ENCODE measurements at regions of chr2 and their contacts with region 1.

Region 1: GRCh38 chr2:226799181-226799975 is at the start of gene IRS1:
- DNase-seq: peak; percentile 71
- ATAC-seq: peak; percentile 65
- H3K4me3 Mint-ChIP-seq: peak within 1 kb of the TSS; percentile 84
- H3K27ac Mint-ChIP-seq: peak within 1 kb of the TSS; percentile 80
- H3K4me1 Mint-ChIP-seq: peaks cover 45% of the 10 kb centered on the region
- H3K27me3 Mint-ChIP-seq: peaks cover under 1% of the 10 kb centered on the region
- CTCF ChIP-seq: no peak
- total RNA-seq, gene IRS1: 3.5 to 4.0 TPM

Region 2: DNA sequence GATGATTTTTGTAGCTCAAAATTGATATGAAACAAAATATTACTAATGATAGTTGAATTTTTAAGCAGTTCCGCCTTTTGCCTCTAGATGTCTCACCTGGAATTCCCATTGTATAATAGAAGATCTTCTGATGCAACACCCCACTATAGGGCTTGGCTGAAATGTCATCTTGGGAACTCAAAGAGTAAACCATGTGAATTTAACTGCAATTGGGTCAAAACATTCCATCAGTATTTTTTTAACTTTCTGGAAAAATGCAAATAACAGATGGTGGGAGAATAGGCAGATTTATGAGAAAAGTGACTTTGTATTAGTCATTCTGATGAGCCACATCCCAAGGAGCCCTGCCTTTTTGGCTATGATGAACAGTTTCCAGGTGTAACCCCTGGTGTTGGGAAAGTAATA is 909.9 kb before region 1 on chr2:
- CTCF ChIA-PET with region 1: no interaction called
- POLR2A ChIA-PET with region 1: no interaction called
- intact Hi-C with region 1: loop called (anchors 5 kb)
- DNase-seq: no peak
- ATAC-seq: no peak
- H3K4me3 Mint-ChIP-seq: no peak overlapping the region
- H3K27ac Mint-ChIP-seq: no peak overlapping the region
- H3K4me1 Mint-ChIP-seq: peaks cover 2% of the 10 kb centered on the region
- H3K27me3 Mint-ChIP-seq: peaks cover 13% of the 10 kb centered on the region
- CTCF ChIP-seq: peak; percentile 76

Region 3: GRCh38 chr2:226733189-226733858 is 66.1 kb before region 1 on chr2:
- CTCF ChIA-PET with region 1: no interaction called
- POLR2A ChIA-PET with region 1: no interaction called
- intact Hi-C with region 1: no loop called
- DNase-seq: no peak
- ATAC-seq: no peak
- H3K4me3 Mint-ChIP-seq: no peak overlapping the region
- H3K27ac Mint-ChIP-seq: no peak overlapping the region
- H3K4me1 Mint-ChIP-seq: no peaks in the 10 kb centered on the region
- H3K27me3 Mint-ChIP-seq: peaks cover 1% of the 10 kb centered on the region
- CTCF ChIP-seq: no peak

Region 4: GRCh38 chr2:226813148-226813701 is 13.8 kb after region 1 on chr2:
- CTCF ChIA-PET with region 1: interaction called, 17 read pairs
- POLR2A ChIA-PET with region 1: no interaction called
- intact Hi-C with region 1: no loop called
- DNase-seq: peak; percentile 24
- ATAC-seq: no peak
- H3K4me3 Mint-ChIP-seq: no peak overlapping the region
- H3K27ac Mint-ChIP-seq: no peak overlapping the region
- H3K4me1 Mint-ChIP-seq: no peaks in the 10 kb centered on the region
- H3K27me3 Mint-ChIP-seq: peaks cover 16% of the 10 kb centered on the region
- CTCF ChIP-seq: peak; percentile 30

Region 5: GRCh38 chr2:226828191-226828590 is 28.8 kb after region 1 on chr2:
- CTCF ChIA-PET with region 1: interaction called, 14 read pairs
- POLR2A ChIA-PET with region 1: no interaction called
- intact Hi-C with region 1: no loop called
- DNase-seq: no peak
- ATAC-seq: no peak
- H3K4me3 Mint-ChIP-seq: no peak overlapping the region
- H3K27ac Mint-ChIP-seq: no peak overlapping the region
- H3K4me1 Mint-ChIP-seq: peaks cover 20% of the 10 kb centered on the region
- H3K27me3 Mint-ChIP-seq: no peaks in the 10 kb centered on the region
- CTCF ChIP-seq: no peak

Region 6: GRCh38 chr2:226984750-226985582 is 185.6 kb after region 1 on chr2:
- CTCF ChIA-PET with region 1: interaction called, 24 read pairs
- POLR2A ChIA-PET with region 1: no interaction called
- intact Hi-C with region 1: loop called (anchors 5 kb)
- DNase-seq: peak; percentile 57
- ATAC-seq: peak; percentile 97
- H3K4me3 Mint-ChIP-seq: no peak overlapping the region
- H3K27ac Mint-ChIP-seq: peak overlapping the region; percentile 34
- H3K4me1 Mint-ChIP-seq: peaks cover 22% of the 10 kb centered on the region
- H3K27me3 Mint-ChIP-seq: no peaks in the 10 kb centered on the region
- CTCF ChIP-seq: peak; percentile 65

Region 7: DNA sequence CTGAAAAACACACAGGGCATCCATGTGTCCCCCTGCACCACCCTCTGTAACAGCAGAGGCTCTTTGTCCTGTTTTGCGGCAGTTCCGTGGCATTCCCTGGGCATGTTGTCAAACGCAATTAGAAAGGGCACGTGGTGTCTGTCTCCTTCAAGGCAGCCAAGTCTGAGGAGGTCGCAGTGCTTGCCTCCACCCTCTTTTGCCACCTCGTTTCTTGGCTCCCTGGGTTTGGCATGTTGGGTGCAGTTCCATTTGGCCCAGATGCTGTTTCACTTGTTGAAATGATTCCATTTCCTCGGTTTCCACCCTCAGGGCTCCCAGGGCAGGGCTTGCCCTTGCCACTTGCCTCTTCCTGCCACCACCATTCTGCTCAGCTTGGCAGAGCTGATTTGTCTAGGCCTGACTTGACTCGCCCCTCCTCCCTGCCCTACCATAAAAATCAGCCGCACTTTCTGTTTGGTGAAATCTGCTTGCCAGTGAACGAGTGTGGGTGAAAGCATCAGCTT is 1026.7 kb after region 1 on chr2:
- CTCF ChIA-PET with region 1: no interaction called
- POLR2A ChIA-PET with region 1: no interaction called
- intact Hi-C with region 1: no loop called
- DNase-seq: peak; percentile 14
- ATAC-seq: peak; percentile 49
- H3K4me3 Mint-ChIP-seq: no peak overlapping the region
- H3K27ac Mint-ChIP-seq: peak overlapping the region; percentile 28
- H3K4me1 Mint-ChIP-seq: peaks cover 3% of the 10 kb centered on the region
- H3K27me3 Mint-ChIP-seq: peaks cover 6% of the 10 kb centered on the region
- CTCF ChIP-seq: no peak